ENCODE measurements at regions of chr11 and their contacts with region 1.

Region 1: DNA sequence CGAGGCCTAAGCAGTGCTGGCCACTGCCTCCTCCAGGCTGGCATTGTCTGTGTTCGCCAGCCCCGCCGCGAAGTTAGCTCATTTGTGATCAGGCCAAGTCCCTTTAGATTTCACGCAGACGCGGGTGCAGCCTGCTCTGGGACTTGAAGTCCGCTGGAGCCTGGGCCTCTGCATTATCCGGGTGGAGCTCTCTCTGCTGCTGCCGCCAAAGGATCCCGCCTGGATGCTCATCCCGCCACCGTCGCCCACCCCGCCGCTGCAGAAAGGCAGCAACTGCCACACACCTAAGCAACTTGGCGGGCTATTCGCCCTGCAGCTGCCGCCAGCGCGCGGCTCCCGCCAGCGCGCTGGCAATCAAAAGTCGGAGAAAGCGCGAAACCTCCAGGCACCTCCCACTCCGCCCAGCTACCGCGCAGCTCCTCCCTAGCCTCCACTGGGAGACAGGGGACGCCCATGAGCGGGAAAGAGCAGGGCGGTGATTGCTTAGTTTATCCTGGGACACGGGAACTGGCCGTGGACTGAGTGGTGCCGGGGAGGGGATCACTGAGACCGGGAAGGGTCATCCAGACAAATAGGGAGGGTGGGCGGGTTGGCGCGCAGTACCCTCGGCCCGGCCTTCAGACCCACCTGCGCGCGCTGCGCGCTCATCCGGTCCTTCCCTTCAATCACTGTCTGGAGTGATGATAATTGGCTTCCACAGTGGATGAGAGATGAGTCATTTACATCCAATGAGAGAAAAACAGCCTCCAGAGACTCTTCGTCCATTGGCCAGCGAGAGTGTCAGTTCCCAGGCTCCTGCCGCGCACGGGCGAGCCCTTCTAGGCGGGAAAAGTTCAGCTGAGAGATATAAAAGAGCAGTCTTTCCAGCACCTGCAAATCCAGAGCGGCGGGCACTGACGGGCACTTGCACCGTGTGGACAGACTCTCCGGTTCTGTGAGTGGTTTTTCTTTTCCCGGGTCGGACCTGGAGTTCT is at the start of gene FAM111B:
- H3K4me3 ChIP-seq: peak within 1 kb of the TSS; percentile 64
- H3K27ac ChIP-seq: peak within 1 kb of the TSS; percentile 81; the same call in 1 of the 2 replicates
- H3K4me1 ChIP-seq: no peaks in the 10 kb centered on the region
- CTCF ChIP-seq: no peak

Region 2: DNA sequence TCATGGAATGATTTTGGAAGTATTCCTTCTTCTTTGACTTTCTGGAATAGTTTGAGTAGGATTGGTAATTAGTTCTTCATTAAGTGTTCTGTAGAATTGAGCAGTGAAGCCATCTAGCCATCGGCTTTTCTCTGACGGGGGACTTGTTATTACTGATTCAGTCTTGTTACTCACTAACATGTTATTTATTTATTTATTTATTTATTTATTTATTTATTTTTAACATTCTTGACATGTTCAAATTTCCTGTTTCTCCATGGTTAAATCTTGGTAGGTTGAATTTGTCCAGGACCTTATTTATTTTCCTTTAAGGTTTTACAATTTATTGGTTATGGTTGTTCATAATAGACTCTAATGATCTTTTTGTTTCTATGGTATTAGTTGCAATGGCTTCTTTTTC is 862.7 kb before region 1 on chr11:
- CTCF ChIA-PET with region 1: no interaction called
- POLR2A ChIA-PET with region 1: no interaction called
- H3K4me3 ChIP-seq: no peak overlapping the region
- H3K27ac ChIP-seq: no peak overlapping the region
- H3K4me1 ChIP-seq: no peaks in the 10 kb centered on the region
- CTCF ChIP-seq: no peak

Region 3: GRCh38 chr11:58963528-58964104 is 143.0 kb before region 1 on chr11:
- CTCF ChIA-PET with region 1: no interaction called
- POLR2A ChIA-PET with region 1: no interaction called
- H3K4me3 ChIP-seq: no peak overlapping the region
- H3K27ac ChIP-seq: no peak overlapping the region
- H3K4me1 ChIP-seq: no peaks in the 10 kb centered on the region
- CTCF ChIP-seq: no peak

Region 4: DNA sequence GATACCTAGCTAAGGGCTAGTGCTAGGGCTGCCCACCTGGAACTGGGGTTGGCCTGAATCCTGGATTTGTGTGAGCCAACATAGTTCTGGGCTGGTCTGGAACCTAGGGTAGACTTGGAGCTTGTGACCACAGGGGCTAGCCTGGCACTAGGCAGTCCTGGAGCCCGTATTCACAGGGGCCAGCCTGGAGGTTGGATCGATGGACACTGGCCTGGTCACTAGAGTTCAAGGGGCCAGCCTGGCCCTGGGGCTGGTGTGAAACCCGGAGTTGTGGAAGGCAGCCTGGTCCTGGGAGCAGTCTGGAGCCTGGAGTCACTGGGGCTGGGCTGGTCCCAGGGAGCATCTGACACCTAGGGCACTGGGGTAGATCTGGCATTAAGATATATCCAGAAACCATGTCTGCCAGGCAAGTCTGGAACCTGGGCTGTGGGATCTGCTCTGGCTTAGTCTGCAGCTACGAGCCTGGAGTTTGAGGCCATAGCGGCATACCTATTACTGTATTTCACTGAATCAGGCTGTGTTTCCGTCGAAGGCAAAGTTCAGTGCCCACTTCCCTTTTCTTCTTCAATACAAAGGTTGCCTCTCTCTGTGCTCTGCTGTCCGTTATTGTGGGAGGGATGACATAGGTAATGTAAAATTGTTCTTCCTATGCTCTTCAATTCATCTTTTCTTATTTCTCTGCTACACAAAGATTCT is 29.6 kb before region 1 on chr11:
- CTCF ChIA-PET with region 1: no interaction called
- POLR2A ChIA-PET with region 1: no interaction called
- H3K4me3 ChIP-seq: no peak overlapping the region
- H3K27ac ChIP-seq: no peak overlapping the region
- H3K4me1 ChIP-seq: no peaks in the 10 kb centered on the region
- CTCF ChIP-seq: no peak

Region 5: DNA sequence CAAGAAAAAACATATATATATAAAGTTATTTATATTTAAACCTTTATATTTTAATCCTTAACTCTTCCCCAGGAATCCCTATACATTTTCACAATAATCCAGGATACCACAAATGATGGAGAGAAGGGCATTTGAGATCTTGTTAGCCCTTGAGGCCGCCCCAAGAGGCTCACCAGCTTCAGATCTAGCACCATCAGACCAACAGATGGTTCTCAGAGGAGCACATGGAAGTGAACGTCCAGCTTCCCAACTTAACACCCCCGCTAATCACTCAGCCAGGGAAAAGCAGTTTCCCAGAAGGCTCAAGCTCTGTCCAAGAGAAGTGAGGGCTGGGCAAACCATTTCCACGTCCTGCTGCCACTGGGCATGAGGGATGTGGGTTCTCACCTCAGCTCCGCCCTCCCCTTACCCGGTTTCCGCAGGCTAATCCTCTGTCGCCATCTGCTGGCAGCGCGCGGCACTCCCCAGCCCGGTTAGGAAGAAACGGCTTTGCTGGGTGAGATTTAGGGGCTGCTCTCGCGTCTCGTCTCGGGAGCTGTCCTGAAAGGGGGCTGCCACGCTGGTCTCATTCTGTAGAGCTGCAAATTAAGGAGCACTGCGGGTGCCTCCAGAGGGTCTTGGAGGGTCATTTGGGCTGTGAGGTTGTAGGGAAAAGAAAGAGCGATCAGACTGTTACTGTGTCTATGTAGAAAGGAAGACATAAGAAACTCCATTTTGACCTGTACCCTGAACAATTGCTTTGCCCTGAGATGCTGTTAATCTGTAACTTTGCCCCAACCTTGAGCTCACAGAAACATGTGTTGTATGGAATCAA is 29.2 kb after region 1 on chr11:
- CTCF ChIA-PET with region 1: interaction called, 10 read pairs
- POLR2A ChIA-PET with region 1: interaction called, 11 read pairs
- H3K4me3 ChIP-seq: no peak overlapping the region; the same call in 1 of the 2 replicates
- H3K27ac ChIP-seq: no peak overlapping the region
- H3K4me1 ChIP-seq: no peaks in the 10 kb centered on the region
- CTCF ChIP-seq: 0 out of 2 replicates have a peak, but pooled peaks have one; percentile 8

Region 6: GRCh38 chr11:59224351-59224928 is 117.8 kb after region 1 on chr11:
- CTCF ChIA-PET with region 1: no interaction called
- POLR2A ChIA-PET with region 1: no interaction called
- H3K4me3 ChIP-seq: no peak overlapping the region
- H3K27ac ChIP-seq: no peak overlapping the region
- H3K4me1 ChIP-seq: no peaks in the 10 kb centered on the region
- CTCF ChIP-seq: no peak